ENCODE measurements at regions of chr1 and their contacts with region 1.

Region 1: DNA sequence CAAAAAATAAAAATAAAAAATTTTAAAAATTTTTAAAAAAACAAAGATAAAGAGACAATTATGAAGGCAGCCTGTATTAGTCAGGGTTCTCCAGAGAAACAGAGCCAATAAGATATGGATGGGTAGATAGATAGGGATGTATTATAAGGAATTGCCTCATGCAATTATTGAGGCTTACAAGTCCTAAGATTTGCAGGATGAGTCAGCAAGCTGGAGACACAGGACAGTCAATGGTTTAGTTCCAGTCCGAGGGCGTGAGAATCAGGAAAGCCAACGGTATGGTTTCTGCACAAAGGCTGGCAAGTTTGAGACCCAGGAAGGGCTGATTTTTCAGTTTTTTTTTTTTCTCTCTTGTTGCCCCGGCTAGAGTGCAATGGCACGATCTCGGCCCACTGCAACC is 24.1 kb upstream of the EIF4G3 start:
- DNase-seq: no peak
- H3K27ac ChIP-seq: no peak overlapping the region
- CTCF ChIP-seq: no peak

Region 2: GRCh38 chr1:20981915-20982314 is 218.9 kb before region 1 on chr1:
- CTCF ChIA-PET with region 1: interaction called, 13 read pairs
- POLR2A ChIA-PET with region 1: no interaction called
- DNase-seq: no peak
- H3K27ac ChIP-seq: no peak overlapping the region
- CTCF ChIP-seq: 0 out of 2 replicates have a peak, but pooled peaks have one; percentile 19

Region 3: GRCh38 chr1:21302747-21303715 is 102.3 kb after region 1 on chr1:
- CTCF ChIA-PET with region 1: no interaction called
- POLR2A ChIA-PET with region 1: no interaction called
- DNase-seq: peak; percentile 73
- H3K27ac ChIP-seq: peak overlapping the region; percentile 95
- CTCF ChIP-seq: no peak; the same call in 1 of the 2 replicates